ENCODE measurements at regions of chr3 and their contacts with region 1.

Region 1: DNA sequence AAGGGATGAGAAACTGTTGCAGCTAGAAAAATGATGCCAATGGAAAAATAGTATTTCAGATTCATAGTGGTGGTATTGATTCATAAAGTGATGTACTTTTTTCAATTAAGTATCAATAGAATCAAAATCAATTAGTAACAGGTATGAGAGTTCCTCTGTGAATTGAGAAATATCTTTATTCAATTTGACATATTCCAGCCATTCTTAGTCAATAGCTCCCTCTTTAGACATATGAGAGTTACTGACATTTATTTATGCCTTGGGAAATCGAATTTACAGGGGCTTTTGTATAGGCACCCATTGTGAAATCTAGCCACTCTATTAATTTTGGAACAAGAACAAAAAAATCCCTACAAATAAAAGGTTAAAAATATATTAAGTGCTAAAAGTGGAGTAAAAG is 386.9 kb upstream of the CNTN3 start:
- DNase-seq: no peak
- ATAC-seq: no peak
- H3K4me3 ChIP-seq: no peak overlapping the region
- H3K27ac ChIP-seq: no peak overlapping the region
- H3K4me1 ChIP-seq: no peaks in the 10 kb centered on the region
- H3K27me3 ChIP-seq: no peaks in the 10 kb centered on the region
- CTCF ChIP-seq: peak in 8 of 9 donors; percentile 6 to 56 (median 45)

Region 2: GRCh38 chr3:73868688-73869315 is 1132.5 kb before region 1 on chr3:
- intact Hi-C with region 1: loop called in 2 of 10 experiments (anchors 10 kb)
- DNase-seq: peak in 1 of 2 donors; percentile 29
- ATAC-seq: peak in 4 of 8 donors; percentile 41 to 67 (median 56)
- H3K4me3 ChIP-seq: no peak overlapping the region
- H3K27ac ChIP-seq: no peak overlapping the region
- H3K4me1 ChIP-seq: peaks cover 0 to 5% (median 0%) of the 10 kb centered on the region in 9 donors
- H3K27me3 ChIP-seq: no peaks in the 10 kb centered on the region
- CTCF ChIP-seq: peak; percentile 18 to 65 (median 54)

Region 3: DNA sequence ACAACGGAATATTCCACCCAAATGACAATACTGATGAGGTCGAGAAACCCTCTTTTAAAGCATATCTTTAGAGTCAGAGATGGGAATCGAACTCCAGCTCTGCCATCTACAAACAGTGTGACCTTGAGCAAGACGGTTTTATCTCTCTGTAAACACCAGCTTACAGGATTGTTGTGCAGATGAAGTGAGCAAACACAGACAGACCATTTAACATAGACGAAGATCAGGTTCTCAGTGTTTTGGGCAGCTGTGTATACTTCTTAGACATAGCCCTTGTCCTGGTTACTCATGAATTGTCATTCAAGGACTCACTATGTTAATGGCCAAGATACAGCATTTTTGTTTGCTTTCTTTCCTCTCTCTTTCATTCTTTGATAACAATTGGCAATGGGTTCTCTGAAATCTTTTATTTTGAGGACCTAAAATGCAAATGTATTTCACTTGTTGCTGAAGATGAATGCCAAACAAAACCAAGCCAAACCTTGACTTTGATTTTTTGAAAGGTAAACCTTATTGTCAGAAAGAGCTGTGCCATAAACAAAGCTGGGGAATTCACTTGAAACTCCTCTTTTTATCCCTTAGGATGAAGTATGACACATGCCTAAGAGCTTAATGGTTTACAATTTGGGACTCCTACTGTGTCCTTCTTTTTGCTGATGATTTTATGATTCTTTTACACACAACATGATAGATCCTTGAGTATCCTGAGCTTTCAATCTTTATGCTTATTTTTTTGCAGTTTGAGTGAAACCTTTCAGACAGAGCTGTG is 1126.5 kb before region 1 on chr3:
- intact Hi-C with region 1: loop called in 2 of 10 experiments (anchors 10 kb)
- DNase-seq: no peak
- ATAC-seq: no peak
- H3K4me3 ChIP-seq: no peak overlapping the region
- H3K27ac ChIP-seq: no peak overlapping the region
- H3K4me1 ChIP-seq: no peaks in the 10 kb centered on the region
- H3K27me3 ChIP-seq: no peaks in the 10 kb centered on the region
- CTCF ChIP-seq: no peak

Region 4: DNA sequence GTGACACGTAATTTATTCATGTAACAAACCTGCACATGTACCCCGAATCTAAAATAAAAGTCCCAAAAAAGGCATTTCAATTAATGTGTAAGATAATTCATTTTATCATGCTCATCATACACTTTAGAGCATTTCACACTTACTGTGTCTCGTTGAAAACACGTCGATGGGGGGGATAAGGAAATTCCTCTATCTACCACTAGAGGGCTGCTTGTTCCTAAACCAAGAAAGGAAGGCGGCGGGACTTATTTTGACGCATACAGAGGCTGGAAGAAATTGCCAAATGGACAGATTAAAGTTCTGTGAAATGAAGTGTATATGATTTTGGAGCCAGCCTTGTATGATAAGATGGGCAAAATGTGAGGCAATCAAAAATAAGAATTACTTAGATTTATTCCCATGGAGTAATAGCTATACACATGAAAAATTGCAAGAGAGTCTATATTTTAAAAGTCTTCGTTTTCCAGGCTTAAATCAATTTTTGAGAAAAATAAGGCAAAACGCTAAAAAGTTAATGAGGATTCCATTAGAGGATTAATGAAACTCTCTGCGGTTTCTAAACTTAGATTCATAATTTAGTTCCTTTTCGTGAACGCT is 733.6 kb before region 1 on chr3:
- intact Hi-C with region 1: loop called in 4 of 10 experiments (anchors 5 to 10 kb)
- DNase-seq: peak in 1 of 2 donors; percentile 15
- ATAC-seq: peak in 1 of 8 donors; percentile 23
- H3K4me3 ChIP-seq: no peak overlapping the region
- H3K27ac ChIP-seq: no peak overlapping the region
- H3K4me1 ChIP-seq: no peaks in the 10 kb centered on the region
- H3K27me3 ChIP-seq: no peaks in the 10 kb centered on the region
- CTCF ChIP-seq: peak; percentile 56 to 81 (median 72)

Region 5: GRCh38 chr3:74314696-74315095 is 686.6 kb before region 1 on chr3:
- intact Hi-C with region 1: no loop called
- DNase-seq: no peak
- ATAC-seq: no peak
- H3K4me3 ChIP-seq: no peak overlapping the region
- H3K27ac ChIP-seq: no peak overlapping the region
- H3K4me1 ChIP-seq: no peaks in the 10 kb centered on the region
- H3K27me3 ChIP-seq: no peaks in the 10 kb centered on the region
- CTCF ChIP-seq: no peak

Measured in heart right ventricle (tissue), 16 donors.